ENCODE measurements at regions of chr17 and their contacts with region 1.

Region 1: DNA sequence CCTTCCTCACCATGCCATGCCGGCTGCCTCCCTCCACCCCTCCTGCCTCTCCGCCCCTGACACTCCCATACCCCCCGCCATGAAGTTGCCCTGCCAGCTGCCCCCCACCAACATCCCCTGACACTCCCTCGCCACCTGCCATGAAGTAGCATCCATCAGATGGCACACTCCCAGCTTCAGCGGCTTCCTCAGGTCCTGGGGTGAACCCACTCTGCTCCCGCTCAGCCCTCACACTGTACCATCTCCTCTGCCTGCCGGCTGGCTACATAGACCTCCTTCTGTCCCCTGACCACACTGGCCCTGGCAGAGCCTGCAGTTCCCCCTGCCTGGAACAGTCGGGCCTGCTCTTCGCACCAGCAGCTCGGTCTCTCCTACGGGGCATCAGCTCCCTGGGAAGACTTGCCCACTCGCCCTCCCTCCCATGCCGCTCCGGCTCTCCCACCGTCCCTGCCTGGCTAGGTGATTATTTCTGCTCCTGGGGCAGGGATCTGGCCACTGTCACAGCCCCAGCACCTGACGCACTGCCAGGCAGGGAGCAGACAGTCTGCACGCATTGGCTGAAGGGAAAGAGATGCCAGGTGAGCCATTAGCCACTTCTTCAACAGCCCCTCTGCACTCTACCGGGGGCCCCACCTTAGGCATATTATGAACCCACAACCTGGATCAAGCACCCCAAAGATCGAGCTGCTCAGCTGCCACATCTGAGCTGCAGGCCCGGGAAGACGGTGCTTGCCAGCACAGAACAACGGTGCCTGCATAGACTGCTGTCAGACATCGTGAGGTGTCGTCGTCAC is 9.0 kb downstream of the CANT1 start:
- DNase-seq: peak in 1 of 2 donors; percentile 44
- H3K4me3 ChIP-seq: no peak overlapping the region
- H3K27ac ChIP-seq: no peak overlapping the region
- H3K4me1 ChIP-seq: peaks cover 1 to 27% of the 10 kb centered on the region in 2 donors
- H3K27me3 ChIP-seq: no peaks in the 10 kb centered on the region
- CTCF ChIP-seq: no peak
- POLR2A ChIP-seq: no peak

Region 2: DNA sequence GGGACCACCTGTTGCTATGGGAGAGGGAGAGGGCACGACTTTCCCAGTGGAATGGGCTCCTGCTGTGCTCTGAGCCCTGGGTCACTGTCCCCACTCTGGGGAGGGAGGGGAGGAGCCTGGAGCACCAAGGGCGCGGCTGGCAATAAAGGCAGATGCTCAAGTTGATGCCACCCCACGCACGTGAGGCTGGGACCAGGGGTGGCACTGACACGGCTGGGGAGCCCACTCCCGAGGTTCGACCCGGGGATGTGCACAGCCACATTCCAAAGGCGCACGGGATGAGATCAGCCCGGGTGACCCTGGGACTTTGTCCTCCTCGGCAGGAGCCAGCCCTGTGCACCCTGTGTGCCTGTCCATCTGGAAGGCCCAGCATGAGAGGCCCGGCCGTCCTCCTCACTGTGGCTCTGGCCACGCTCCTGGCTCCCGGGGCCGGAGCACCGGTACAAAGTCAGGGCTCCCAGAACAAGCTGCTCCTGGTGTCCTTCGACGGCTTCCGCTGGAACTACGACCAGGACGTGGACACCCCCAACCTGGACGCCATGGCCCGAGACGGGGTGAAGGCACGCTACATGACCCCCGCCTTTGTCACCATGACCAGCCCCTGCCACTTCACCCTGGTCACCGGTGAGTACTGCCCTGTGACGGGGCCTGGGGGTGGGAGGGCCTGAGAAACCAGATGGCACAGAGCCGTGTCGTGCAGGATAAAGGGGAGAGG is 730.3 kb after region 1 on chr17 and contains the start of gene ENPP7:
- intact Hi-C with region 1: loop called (anchors 2 kb)
- DNase-seq: no peak
- H3K4me3 ChIP-seq: no peak within 1 kb of the TSS
- H3K27ac ChIP-seq: no peak within 1 kb of the TSS
- H3K4me1 ChIP-seq: no peaks in the 10 kb centered on the region
- H3K27me3 ChIP-seq: no peaks in the 10 kb centered on the region
- CTCF ChIP-seq: no peak
- POLR2A ChIP-seq: no peak
- total RNA-seq, gene ENPP7: not detected